ENCODE measurements at regions of chr2 and their contacts with region 1.

Region 1: GRCh38 chr2:175414882-175415487 is 233.5 kb upstream of the ATP5MC3 start:
- DNase-seq: peak; percentile 43 to 56 (median 50)
- ATAC-seq: peak; percentile 95
- H3K4me3 ChIP-seq: no peak overlapping the region
- H3K27ac ChIP-seq: no peak overlapping the region
- H3K4me1 ChIP-seq: peaks cover 6 to 10% of the 10 kb centered on the region in 2 experiments; a peak in 4 of 5 replicates
- H3K27me3 ChIP-seq: no peaks in the 10 kb centered on the region
- CTCF ChIP-seq: peak; percentile 68 to 73 (median 70)
- EP300 ChIP-seq: no peak
- POLR2A ChIP-seq: no peak
- RAD21 ChIP-seq: peak; percentile 55 to 71

Region 2: DNA sequence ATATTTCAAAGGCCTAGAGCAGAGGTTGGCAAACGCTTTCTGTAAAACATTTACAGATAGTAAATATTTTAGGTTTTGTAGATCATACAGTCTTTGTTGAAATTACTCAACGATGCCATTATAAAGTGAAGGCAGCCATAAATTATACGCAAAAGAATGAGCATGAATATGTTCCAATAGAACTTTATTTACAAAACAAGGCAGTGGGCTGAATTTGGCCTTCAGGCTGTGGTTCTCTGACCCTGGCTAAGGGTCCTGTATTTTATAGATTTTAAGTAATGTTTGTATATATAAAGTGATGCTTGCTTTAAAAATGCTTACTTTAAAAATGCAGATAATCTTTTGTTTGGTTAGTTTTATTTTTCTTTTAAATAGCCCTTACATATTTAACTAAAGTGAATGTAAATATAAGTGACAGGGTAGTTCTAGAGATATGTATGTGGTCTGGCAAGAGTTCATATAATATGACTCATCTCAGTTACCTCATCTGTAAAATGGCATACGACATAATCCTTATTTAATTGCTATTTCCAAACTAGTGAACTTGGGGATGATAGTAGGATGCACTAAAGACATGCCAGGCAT is 181.8 kb before region 1 on chr2:
- CTCF ChIA-PET with region 1: no interaction called
- POLR2A ChIA-PET with region 1: no interaction called
- in situ Hi-C with region 1: no loop called
- intact Hi-C with region 1: no loop called
- DNase-seq: no peak
- ATAC-seq: no peak
- H3K4me3 ChIP-seq: no peak overlapping the region
- H3K27ac ChIP-seq: no peak overlapping the region
- H3K4me1 ChIP-seq: no peaks in the 10 kb centered on the region; a peak in 1 of 5 replicates
- H3K27me3 ChIP-seq: peaks cover 2 to 4% of the 10 kb centered on the region in 2 experiments; a peak in 2 of 5 replicates
- CTCF ChIP-seq: no peak
- EP300 ChIP-seq: no peak
- POLR2A ChIP-seq: no peak
- RAD21 ChIP-seq: no peak

Region 3: DNA sequence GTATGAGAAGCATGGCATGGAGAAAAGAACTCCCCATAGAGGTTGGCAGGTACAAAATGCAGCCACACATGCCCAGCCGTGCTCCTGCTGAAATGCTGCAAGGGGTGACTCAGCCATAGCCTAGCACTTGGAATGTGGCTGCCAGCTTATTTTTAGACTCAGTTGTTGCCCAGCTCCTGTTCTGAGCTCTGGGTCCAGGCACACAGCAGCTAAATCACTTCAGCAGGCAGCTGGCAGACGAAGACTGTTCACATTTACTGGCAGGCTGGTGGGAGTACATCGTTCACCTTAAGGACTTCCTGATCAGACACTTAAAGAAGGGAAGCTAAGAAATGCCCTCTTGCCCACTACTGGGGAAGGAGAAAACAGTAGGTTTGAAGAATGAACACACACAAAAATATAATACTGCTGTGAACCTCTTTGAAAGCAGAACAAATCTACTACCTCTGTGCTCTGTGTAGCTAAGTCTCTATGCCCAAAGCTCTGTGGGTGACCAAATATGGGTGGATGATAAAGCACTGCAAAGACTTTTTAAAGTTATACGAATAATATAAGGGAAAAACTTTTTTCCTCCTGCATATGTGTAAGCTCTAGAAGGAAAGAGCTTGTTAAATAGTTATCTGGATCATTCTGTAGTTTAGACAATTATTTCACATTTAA is 440.9 kb after region 1 on chr2:
- CTCF ChIA-PET with region 1: no interaction called
- POLR2A ChIA-PET with region 1: no interaction called
- in situ Hi-C with region 1: no loop called
- intact Hi-C with region 1: loop called (anchors 10 kb)
- DNase-seq: no peak
- ATAC-seq: no peak
- H3K4me3 ChIP-seq: no peak overlapping the region
- H3K27ac ChIP-seq: no peak overlapping the region
- H3K4me1 ChIP-seq: no peaks in the 10 kb centered on the region
- H3K27me3 ChIP-seq: peaks cover 11 to 15% of the 10 kb centered on the region in 2 experiments; a peak in 4 of 5 replicates
- CTCF ChIP-seq: no peak
- EP300 ChIP-seq: no peak
- POLR2A ChIP-seq: no peak
- RAD21 ChIP-seq: no peak

Measured in K562 (cell line).